GM10248 (cell line): ENCODE measurements at regions of chr1 and their contacts with region 1.

Region 1: DNA sequence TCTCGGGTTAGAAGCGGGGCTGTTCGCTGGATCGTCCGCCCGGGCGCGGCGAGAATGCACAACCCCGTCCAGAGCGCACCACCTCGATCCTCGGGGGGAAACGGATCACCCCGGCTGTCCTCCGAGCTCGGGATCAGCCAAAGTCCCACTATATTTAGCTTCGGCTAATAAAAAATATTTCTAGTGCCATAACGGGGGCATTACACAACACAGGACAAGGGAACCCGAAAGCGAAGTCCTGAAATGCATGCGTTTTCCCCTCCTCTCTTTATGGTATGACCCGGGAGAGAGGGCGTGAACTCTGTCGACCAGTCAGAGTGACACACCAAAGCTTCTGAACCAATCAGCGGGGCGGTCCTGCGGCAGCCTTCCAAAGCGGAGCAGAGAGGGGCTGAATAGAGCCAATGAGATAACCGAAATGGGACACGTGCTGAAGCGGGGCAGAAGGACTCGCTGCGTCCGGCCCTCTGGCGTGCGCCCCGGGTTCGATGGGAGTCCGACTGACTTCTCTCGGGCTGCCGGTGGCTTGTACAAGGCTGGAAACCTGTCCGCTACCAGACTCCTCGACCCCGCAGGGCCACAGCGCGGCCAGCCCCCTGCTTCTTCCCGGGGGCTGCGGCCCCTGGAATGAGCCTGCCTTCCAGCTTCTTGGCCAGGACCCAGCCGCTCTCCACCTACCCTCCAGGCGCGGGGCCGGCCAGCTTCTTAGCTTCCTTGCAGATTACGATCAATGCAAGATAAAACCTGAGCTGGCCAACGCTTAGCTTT is at the start of gene ALDH4A1:
- DNase-seq: peak; percentile 99
- CTCF ChIP-seq: no peak

Region 2: GRCh38 chr1:18854331-18855025 is 48.2 kb before region 1 on chr1:
- CTCF ChIA-PET with region 1: no interaction called
- POLR2A ChIA-PET with region 1: no interaction called
- DNase-seq: no peak
- CTCF ChIP-seq: no peak

Region 3: DNA sequence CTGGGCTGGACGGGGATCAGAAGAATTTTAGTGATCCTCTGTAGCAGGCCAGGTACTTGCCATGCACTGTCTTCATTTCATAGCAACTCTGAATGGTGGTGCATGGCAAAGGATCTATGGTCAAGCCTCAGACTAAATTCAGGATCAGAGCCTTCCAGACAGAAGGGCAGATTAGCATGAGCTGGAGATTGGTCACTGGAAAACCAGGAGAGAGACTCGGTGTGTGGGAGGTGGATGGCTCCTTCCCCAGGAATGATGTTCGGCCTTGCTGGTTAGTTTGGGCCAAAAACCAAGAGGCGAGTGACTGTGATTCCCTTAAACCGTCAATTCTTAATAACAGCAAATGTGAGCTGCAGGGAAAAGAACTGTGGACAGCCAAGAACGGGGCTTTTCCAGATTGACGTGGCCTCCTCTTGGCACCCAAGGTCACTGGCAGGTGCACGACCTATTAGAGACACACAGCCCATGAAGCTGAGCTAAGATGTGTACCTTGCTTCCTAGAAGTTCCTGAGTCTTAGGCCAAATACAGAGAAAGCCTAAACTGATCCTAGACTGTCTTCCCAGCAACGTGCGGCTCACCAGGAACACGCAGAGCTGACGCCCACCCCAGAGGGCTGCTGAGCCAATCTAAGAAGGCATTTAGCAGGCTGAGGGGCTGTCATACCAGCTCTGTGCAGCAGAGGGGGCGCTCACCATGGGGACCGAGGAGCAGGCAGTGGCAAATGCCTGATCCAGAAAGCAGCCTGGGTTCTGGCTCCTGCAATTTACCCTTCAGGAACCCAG is 18.9 kb before region 1 on chr1:
- CTCF ChIA-PET with region 1: interaction called, 89 read pairs
- POLR2A ChIA-PET with region 1: no interaction called
- DNase-seq: peak; percentile 77
- CTCF ChIP-seq: peak; percentile 90

Region 4: DNA sequence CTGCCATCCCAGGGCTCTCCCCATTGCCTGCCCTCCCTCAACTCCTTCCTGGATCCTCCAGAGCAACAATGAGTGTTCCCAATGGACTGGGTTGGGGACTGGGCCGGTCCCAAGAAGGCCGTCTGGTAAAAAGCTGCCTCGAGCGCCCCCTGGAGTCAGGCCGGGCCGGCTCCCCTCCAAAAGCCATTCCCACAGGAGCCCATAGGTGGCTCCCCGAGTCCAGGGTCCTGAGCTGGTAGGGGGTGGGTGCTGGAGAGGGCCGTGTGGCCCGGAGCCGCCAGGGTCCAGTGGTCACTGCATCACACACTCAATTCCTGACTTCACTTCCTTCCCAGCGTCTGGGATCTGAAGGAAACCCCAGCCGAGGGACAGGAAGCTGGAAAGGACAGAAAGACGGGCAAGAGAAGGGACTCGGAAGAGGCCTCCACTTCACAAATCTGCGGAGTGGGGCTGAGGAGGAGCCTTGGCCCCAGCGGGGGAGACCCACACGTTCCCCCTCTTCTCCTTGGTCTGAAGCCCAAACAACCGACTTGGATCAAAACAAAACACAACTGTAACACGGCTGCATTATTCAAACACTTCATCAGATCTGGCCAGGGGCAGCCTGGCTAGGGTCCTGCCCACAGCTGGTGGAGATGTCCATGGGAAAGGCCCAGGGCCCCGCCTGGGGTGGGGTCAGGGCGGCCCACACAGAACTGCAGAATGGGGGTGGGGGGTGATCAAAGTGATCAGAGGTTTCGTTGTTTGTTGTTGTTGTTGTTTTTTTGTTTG is 10.5 kb after region 1 on chr1:
- CTCF ChIA-PET with region 1: interaction called, 47 read pairs
- POLR2A ChIA-PET with region 1: no interaction called
- DNase-seq: peak; percentile 91
- CTCF ChIP-seq: peak; percentile 98

Region 5: GRCh38 chr1:18932387-18932786 is 29.7 kb after region 1 on chr1:
- CTCF ChIA-PET with region 1: interaction called, 21 read pairs
- POLR2A ChIA-PET with region 1: no interaction called
- DNase-seq: no peak
- CTCF ChIP-seq: no peak

Region 6: DNA sequence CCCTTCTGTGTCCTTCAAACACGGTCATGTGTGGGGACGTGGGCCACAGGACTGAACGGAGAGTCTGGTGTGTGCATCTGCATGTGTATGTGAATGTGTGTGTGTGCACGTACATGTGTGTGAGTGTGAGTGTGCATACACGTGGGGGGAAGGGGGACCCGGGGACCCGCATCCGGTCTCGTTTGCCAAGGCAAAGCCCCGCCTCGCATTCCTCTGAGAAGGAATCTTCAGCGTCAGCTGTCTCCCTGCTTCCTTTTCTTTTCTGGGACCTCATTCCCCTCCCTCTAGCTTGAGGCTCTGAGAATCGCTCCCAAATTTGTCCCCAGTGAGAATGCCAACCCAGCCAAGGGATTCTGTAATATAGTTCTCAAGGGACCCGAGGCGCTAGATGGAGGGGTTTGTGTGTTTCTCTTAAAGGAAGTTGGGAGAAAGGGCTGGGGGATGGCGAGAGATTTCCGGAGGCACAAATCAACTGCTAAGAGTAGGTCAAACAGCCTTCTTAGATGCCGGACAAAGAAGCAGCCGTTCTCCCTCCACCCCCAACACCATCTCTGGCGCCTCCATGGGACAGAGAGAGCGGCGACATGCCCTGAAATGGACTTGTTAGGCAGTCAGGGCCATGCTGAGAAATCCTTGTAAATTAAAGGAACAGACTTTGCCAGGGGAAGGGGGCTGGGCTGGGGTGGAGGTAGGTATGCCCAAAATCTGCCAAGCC is 47.1 kb after region 1 on chr1:
- CTCF ChIA-PET with region 1: interaction called, 34 read pairs
- POLR2A ChIA-PET with region 1: no interaction called
- DNase-seq: peak; percentile 59
- CTCF ChIP-seq: peak; percentile 47

Region 7: DNA sequence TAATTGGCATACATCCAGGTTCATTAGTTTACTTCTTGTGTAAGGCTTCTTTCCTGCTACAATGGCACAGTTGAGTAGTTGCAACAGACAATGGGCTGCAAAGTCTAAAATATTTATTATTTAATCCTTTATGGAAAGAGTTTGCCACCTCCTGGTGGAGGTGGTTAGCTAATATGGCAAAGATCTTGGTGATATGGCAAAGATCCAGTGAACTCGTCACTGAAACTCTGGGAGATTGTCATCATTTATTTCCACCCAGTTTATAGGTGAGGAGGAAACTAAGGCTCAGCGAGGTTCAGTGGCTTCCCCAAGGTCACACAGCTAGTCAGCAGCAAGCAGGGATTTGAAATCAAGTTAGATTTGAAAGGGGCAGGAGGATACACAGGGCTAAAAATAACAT is 69.8 kb after region 1 on chr1:
- CTCF ChIA-PET with region 1: interaction called, 23 read pairs
- POLR2A ChIA-PET with region 1: no interaction called
- DNase-seq: no peak
- CTCF ChIP-seq: peak; percentile 15

Region 8: GRCh38 chr1:19113697-19114092 is 211.0 kb after region 1 on chr1:
- CTCF ChIA-PET with region 1: interaction called, 10 read pairs
- POLR2A ChIA-PET with region 1: no interaction called
- DNase-seq: peak; percentile 43
- CTCF ChIP-seq: peak; percentile 41